HEK293 (cell line): ENCODE measurements at regions of chr4 and their contacts with region 1.

Region 1: GRCh38 chr4:15681207-15682015 is at the start of gene FAM200B:
- H3K4me3 ChIP-seq: peak within 1 kb of the TSS; percentile 84
- H3K27ac ChIP-seq: peak within 1 kb of the TSS; percentile 94
- H3K4me1 ChIP-seq: no peaks in the 10 kb centered on the region
- CTCF ChIP-seq: peak; percentile 48; the same call in 1 of the 2 replicates

Region 2: DNA sequence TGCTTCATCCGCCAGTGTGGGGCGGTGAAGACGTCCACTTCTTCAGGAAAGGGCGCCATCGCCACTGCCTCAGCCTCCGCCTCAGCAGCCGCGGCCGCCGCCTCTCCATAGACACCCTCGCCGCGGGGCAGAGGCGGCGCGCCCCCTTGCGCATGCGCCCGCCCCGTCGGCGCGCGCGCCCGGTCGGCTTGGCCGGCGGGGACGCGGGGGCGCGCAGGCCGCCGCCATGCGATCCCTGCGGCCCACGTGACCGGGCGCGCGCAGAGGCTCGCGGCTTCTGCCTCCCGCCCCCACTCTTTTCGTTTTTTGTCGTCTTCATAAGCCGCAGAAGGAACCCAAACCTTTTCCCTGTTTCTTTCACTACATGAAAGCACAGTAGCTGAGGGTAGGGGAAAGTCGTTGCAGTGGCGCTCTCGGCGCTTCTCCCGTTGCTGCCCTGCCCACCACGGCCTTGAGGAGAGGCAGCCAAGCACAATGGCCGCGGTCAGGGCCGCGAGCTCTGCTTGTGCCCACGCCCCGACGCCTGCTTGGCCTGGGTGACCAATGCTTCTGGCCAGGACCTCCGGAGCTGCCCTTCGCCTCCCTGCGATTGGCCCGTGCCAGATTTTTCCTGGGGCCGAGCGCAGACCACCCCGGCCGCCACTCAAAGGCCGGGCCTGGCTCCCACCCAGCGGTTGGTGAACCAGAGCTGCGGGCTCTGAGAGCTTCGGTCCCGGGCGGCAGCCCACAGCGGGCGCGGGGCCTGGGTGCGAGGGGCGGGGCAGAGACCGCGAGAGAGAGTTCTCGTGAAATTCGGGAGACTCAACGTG is 26.0 kb before region 1 on chr4 and contains the start of gene FBXL5:
- CTCF ChIA-PET with region 1: interaction called, 3 read pairs
- POLR2A ChIA-PET with region 1: interaction called, 18 read pairs
- H3K4me3 ChIP-seq: peak within 1 kb of the TSS; percentile 74
- H3K27ac ChIP-seq: peak within 1 kb of the TSS; percentile 91
- H3K4me1 ChIP-seq: 0 out of 2 replicates have a peak, but pooled peaks cover 4% of the 10 kb centered on the region
- CTCF ChIP-seq: no peak

Region 3: GRCh38 chr4:15695240-15695699 is 13.9 kb after region 1 on chr4:
- CTCF ChIA-PET with region 1: interaction called, 3 read pairs
- POLR2A ChIA-PET with region 1: interaction called, 11 read pairs
- H3K4me3 ChIP-seq: no peak overlapping the region
- H3K27ac ChIP-seq: no peak overlapping the region
- H3K4me1 ChIP-seq: no peaks in the 10 kb centered on the region
- CTCF ChIP-seq: no peak